Heart left ventricle (tissue), 16 donors: ENCODE measurements at regions of chr5 and their contacts with region 1.

Region 1: GRCh38 chr5:116574367-116575325 is at the start of gene SEMA6A:
- DNase-seq: peak; percentile 91 to 94 (median 93)
- ATAC-seq: peak; percentile 87 to 94 (median 90)
- H3K4me3 ChIP-seq: peak within 1 kb of the TSS; percentile 42 to 84 (median 68)
- H3K27ac ChIP-seq: peak within 1 kb of the TSS; percentile 38 to 85 (median 80)
- H3K4me1 ChIP-seq: peaks cover 0 to 43% (median 23%) of the 10 kb centered on the region in 12 donors
- H3K27me3 ChIP-seq: peaks cover 0 to 63% (median 6%) of the 10 kb centered on the region in 9 donors
- CTCF ChIP-seq: peak in 3 of 12 donors; percentile 8 to 28 (median 9)
- POLR2A ChIP-seq: peak in 1 of 2 donors; percentile 69
- total RNA-seq, gene SEMA6A: 4.2 to 12.7 (median 7.2) TPM

Region 2: DNA sequence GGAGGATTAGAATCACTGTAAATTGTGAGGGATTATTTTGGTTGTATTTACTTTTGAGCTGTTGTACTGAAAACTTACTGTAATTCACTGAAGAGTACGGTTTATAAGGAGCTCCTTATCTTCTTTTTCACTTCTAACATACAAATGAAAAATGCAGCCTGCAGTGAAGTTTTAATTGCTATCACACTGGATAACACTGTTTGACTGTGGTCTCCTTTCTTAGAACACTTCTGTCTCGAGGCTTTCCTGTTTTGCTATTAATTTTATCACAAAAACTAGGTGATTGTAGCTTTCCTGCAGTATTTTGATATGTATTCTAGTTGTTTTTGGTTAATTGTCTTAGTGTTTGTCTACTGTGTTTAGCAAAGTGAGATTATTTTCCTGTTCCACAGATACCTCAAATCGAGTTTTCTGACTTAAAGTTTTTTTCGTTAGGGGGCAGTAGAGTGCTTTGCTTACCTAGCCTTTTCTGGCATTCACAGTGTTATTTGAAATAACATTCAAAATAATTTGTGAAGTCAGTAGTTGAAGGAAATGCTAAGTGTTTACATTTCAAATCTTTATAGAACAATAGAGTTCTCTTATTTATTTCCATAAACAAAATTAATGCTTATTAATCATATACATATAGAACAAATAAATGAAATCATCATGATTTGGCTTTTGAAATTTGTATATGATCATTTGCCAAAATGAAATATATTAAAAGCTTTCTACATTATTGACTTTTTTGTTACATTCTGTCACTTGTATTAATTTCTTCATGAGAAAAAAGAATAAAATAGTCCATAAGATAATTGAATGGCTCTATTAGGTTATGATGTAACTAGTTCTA is 436.9 kb before region 1 on chr5:
- intact Hi-C with region 1: loop called in 8 of 10 experiments (anchors 5 to 10 kb)
- DNase-seq: no peak
- ATAC-seq: peak in 2 of 4 donors; percentile 34 to 46
- H3K4me3 ChIP-seq: no peak overlapping the region
- H3K27ac ChIP-seq: no peak overlapping the region
- H3K4me1 ChIP-seq: peaks cover 0 to 15% (median 1%) of the 10 kb centered on the region in 12 donors
- H3K27me3 ChIP-seq: no peaks in the 10 kb centered on the region
- CTCF ChIP-seq: peak; percentile 71 to 89 (median 79)
- POLR2A ChIP-seq: no peak

Region 3: DNA sequence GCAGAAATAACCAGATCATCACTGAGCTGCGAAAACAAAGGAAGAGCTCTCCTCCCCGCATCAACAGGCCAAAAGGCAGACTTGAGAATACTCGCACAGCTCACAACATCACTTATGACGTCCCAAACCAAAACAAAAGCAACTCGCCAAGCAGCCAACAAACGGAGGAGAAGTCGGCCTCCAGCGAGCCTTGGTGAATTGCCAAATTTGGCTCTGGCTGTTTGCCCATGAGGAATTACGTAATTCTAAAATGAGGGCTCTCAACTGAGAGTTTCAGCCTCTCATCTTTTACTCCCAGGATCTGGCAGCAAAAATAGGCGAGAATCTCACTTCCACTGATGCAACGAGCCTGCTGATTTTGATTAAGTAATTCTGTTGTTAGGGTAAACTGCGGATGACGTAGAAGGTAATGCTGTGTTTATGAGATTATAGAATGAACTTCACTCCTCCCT is 51.7 kb after region 1 on chr5:
- intact Hi-C with region 1: loop called in 1 of 10 experiments (anchors 5 kb)
- DNase-seq: peak; percentile 70 to 88 (median 76)
- ATAC-seq: peak; percentile 69 to 96 (median 82)
- H3K4me3 ChIP-seq: peak overlapping the region in 6 of 12 donors; percentile 2 to 34 (median 24)
- H3K27ac ChIP-seq: peak overlapping the region in 10 of 12 donors; percentile 5 to 76 (median 57)
- H3K4me1 ChIP-seq: peaks cover 0 to 21% (median 7%) of the 10 kb centered on the region in 12 donors
- H3K27me3 ChIP-seq: no peaks in the 10 kb centered on the region
- CTCF ChIP-seq: no peak
- POLR2A ChIP-seq: no peak

Region 4: DNA sequence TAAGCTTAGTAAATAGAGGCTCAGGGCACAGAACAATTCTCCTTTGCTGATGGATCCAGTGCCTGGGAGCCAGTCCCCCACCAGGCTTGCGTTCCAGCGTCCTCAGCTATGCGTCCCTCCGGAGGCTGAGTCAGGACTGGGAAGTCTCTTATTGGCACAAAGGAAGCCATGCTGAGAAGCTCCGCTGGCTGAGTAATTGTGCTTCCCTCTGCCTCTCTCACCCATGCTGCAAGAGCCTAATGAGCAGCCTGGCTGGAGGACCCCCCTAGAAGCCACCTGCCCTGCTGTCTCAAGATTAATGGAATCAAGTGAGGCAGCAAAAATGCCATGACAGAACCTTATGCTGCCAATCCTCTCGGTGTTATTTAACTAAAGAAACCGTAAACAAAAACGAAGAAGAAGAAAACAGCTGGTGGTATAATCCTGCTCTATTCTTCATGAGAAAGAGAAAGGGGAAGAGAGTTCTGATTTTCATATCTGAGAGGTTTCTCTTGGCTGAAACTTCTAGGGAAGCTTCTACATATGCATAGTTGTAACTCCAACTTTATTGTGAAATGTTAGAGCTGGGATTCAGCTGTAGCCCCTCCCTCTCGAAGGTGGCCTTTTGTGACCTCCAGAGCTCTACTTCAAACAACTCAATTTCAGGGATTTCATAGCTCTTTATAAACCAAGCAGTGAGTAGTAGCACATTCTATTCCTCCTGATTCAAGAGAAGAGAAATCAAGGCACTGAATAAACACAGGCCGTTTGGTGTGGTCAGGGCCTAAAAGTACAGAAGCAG is 185.4 kb after region 1 on chr5:
- intact Hi-C with region 1: no loop called
- DNase-seq: no peak
- ATAC-seq: peak in 1 of 4 donors; percentile 48
- H3K4me3 ChIP-seq: no peak overlapping the region
- H3K27ac ChIP-seq: no peak overlapping the region
- H3K4me1 ChIP-seq: no peaks in the 10 kb centered on the region
- H3K27me3 ChIP-seq: no peaks in the 10 kb centered on the region
- CTCF ChIP-seq: no peak
- POLR2A ChIP-seq: no peak

Region 5: GRCh38 chr5:116788851-116789403 is 214.3 kb after region 1 on chr5:
- intact Hi-C with region 1: loop called in 4 of 10 experiments (anchors 1 to 10 kb)
- DNase-seq: peak in 3 of 5 donors; percentile 38 to 51 (median 47)
- ATAC-seq: peak; percentile 88 to 98 (median 90)
- H3K4me3 ChIP-seq: no peak overlapping the region
- H3K27ac ChIP-seq: peak overlapping the region in 8 of 12 donors; percentile 25 to 67 (median 52)
- H3K4me1 ChIP-seq: peaks cover 0 to 10% (median 2%) of the 10 kb centered on the region in 12 donors
- H3K27me3 ChIP-seq: no peaks in the 10 kb centered on the region
- CTCF ChIP-seq: no peak
- POLR2A ChIP-seq: no peak

Region 6: GRCh38 chr5:116947691-116948528 is 373.3 kb after region 1 on chr5:
- intact Hi-C with region 1: loop called (anchors 2 to 10 kb)
- DNase-seq: peak; percentile 42 to 68 (median 62)
- ATAC-seq: peak; percentile 81 to 89 (median 88)
- H3K4me3 ChIP-seq: no peak overlapping the region
- H3K27ac ChIP-seq: no peak overlapping the region
- H3K4me1 ChIP-seq: peaks cover 0 to 6% (median 0%) of the 10 kb centered on the region in 12 donors
- H3K27me3 ChIP-seq: no peaks in the 10 kb centered on the region
- CTCF ChIP-seq: peak; percentile 54 to 82 (median 72)
- POLR2A ChIP-seq: no peak